Activated CD8-positive, alpha-beta memory T cell treated with anti-CD3 and anti-CD28 coated beads, Interleukin-2, amount 10 ng/mL, durations not matched to agents 7 days and 5 days (primary cell): ENCODE measurements at regions of chr11 and their contacts with region 1.

Region 1: GRCh38 chr11:67630228-67630942 is 648 bp upstream of the NUDT8 start:
- DNase-seq: peak; percentile 99
- ATAC-seq: peak; percentile 76
- H3K4me3 Mint-ChIP-seq: peak overlapping the region; percentile 76
- H3K27ac Mint-ChIP-seq: peak overlapping the region; percentile 87
- H3K4me1 Mint-ChIP-seq: peaks cover 13% of the 10 kb centered on the region
- H3K27me3 Mint-ChIP-seq: no peaks in the 10 kb centered on the region

Region 2: DNA sequence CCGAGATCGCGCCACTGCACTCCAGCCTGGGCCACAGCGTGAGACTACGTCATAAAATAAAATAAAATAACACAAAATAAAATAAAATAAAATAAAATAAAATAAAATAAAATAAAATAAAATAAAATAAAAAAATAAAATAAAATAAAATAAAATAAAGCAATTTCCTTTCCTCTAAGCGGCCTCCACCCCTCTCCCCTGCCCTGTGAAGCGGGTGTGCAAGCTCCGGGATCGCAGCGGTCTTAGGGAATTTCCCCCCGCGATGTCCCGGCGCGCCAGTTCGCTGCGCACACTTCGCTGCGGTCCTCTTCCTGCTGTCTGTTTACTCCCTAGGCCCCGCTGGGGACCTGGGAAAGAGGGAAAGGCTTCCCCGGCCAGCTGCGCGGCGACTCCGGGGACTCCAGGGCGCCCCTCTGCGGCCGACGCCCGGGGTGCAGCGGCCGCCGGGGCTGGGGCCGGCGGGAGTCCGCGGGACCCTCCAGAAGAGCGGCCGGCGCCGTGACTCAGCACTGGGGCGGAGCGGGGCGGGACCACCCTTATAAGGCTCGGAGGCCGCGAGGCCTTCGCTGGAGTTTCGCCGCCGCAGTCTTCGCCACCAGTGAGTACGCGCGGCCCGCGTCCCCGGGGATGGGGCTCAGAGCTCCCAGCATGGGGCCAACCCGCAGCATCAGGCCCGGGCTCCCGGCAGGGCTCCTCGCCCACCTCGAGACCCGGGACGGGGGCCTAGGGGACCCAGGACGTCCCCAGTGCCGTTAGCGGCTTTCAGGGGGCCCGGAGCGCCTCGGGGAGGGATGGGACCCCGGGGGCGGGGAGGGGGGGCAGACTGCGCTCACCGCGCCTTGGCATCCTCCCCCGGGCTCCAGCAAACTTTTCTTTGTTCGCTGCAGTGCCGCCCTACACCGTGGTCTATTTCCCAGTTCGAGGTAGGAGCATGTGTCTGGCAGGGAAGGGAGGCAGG is 46.9 kb before region 1 on chr11 and contains the start of gene GSTP1:
- CTCF ChIA-PET with region 1: interaction called, 22 read pairs
- DNase-seq: peak; percentile 87
- ATAC-seq: peak; percentile 95
- H3K4me3 Mint-ChIP-seq: peak within 1 kb of the TSS; percentile 88
- H3K27ac Mint-ChIP-seq: peak within 1 kb of the TSS; percentile 84
- H3K4me1 Mint-ChIP-seq: peaks cover 49% of the 10 kb centered on the region
- H3K27me3 Mint-ChIP-seq: peaks cover 31% of the 10 kb centered on the region
- total RNA-seq, gene GSTP1: 339 to 406 TPM

Region 3: GRCh38 chr11:67613960-67614715 is 16.2 kb before region 1 on chr11:
- CTCF ChIA-PET with region 1: interaction called, 111 read pairs
- DNase-seq: peak; percentile 88
- ATAC-seq: peak; percentile 85
- H3K4me3 Mint-ChIP-seq: peak overlapping the region; percentile 65
- H3K27ac Mint-ChIP-seq: peak overlapping the region; percentile 94
- H3K4me1 Mint-ChIP-seq: peaks cover 37% of the 10 kb centered on the region
- H3K27me3 Mint-ChIP-seq: peaks cover 9% of the 10 kb centered on the region

Region 4: DNA sequence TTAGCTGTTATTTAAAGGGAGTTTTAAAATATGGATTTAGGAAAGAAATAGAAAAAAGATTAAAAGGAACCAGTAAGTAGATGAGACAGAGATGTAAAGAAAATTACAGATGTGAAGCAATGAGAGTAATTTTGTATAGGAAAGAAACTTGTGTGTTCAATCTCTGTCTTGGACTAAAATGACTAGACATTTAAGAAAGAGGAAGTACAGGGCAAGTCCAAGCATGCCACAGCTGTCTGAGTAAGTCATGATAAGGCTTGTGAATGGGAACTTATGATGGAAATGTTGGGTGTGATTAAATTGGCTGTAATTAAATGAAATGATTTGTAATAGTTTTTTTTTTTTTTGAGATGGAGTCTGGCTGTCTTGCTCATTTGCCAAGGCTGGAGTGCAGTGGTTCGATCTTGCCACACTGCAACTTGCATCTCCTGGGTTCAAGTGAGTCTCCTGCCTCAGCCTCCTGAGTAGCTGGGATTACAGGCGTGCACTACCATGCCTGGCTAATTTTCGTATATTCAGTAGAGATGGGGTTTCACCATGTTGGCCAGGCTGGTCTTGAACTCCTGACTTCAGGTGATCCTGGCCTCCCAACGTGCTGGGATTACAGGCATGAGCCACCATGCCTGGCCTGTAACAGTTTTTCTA is 26.0 kb after region 1 on chr11:
- CTCF ChIA-PET with region 1: interaction called, 157 read pairs
- DNase-seq: no peak
- ATAC-seq: no peak
- H3K4me3 Mint-ChIP-seq: no peak overlapping the region
- H3K27ac Mint-ChIP-seq: peak overlapping the region; percentile 68
- H3K4me1 Mint-ChIP-seq: peaks cover 18% of the 10 kb centered on the region
- H3K27me3 Mint-ChIP-seq: peaks cover 2% of the 10 kb centered on the region

Region 5: DNA sequence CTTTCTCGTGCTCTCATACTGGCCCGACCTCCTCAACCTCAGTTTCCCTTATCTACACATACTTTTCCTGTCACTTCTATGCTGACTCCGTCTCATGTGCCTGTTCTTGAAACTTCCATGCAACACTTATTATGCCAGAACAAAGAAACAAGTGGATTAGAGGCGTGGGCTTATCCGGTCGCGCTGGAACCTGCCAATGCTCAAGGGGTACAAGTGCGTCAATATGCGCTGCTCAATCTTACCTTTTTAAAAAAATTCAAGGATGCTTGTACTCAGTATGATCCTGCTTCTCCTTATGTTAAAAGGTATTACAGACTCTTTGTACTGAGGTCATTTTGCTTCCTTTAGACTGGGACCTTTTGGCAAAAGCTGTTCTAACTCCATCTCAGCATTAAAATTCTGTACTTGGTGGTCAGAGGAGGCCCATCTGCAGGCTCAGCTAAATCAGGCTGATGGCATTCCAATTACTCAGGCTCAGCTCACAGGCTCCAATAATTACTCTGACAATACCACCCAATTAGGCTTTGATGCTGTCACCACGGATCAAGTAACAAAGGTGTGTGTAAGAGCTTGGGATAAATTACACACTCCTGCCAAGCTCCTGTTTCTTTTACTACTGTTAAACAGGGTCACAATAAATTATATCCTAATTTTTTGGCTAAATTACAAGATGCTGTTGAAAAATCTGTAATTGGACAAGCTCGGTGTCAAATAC is 70.3 kb after region 1 on chr11:
- CTCF ChIA-PET with region 1: interaction called, 11 read pairs
- DNase-seq: no peak
- ATAC-seq: no peak
- H3K4me3 Mint-ChIP-seq: no peak overlapping the region
- H3K27ac Mint-ChIP-seq: no peak overlapping the region
- H3K4me1 Mint-ChIP-seq: no peaks in the 10 kb centered on the region
- H3K27me3 Mint-ChIP-seq: peaks cover 43% of the 10 kb centered on the region

Region 6: DNA sequence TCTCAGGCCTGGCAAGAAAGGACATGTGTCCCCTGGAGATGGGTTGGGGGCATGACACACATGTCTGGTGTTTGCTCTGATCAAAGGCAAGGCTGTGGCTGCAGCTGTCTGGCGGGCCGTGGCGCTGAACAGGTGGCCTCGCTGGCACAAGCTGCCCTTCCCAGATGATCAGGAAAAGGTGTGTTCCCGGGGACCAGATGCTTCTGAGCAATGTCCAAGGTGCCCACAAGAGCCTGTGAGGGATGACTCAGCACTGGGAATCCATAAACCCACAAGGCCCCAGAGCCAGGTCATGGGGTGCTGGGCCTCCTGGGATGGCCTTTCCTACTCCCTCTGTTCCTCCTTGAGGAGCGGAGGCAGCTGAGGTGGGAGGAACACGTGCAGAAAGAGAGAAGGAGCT is 672.3 kb after region 1 on chr11:
- CTCF ChIA-PET with region 1: no interaction called
- DNase-seq: no peak
- ATAC-seq: no peak
- H3K4me3 Mint-ChIP-seq: no peak overlapping the region
- H3K27ac Mint-ChIP-seq: no peak overlapping the region
- H3K4me1 Mint-ChIP-seq: peaks cover 19% of the 10 kb centered on the region
- H3K27me3 Mint-ChIP-seq: peaks cover 3% of the 10 kb centered on the region